B cell (primary cell): ENCODE measurements at regions of chr20 and their contacts with region 1.

Region 1: DNA sequence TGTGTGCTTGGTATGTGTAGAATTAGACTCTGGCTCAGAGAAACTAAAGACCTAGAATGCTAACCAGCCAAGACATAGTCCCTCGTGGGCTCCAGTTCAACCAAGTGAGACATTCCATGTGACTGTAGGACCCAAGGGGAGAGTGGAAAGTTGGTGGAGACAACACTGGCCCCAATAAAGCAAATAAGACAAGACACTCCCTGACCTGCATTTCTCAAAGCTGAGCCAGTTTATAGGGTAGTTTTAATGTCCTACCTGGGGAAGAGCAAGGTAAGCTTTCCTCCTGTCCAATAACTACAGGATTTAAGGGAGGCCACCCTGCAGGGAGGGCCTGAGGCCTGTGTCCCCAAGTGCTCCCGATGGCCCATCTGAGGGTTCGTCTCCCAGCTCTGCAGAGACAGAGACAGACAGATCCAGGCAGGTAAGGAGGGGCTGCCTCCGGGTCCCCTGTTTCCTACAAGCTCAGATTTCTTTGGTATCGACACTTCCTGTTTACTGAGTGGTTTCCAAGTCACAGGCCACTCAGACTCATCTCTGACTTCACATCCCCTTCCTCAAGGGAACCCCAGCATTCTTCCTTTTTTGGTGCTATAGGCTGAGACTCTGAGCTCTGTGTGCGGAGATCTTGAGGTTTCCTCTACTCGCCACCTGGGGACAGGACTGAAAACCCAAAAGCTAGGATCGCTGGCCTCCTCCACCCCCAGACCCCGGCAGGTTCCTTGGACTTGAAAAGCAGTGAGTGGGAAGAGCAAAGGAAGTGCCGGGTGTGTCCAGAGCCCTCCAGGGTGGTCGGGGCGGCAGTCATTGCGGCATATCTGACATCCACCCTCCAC is 92.4 kb downstream of the PRND start:
- DNase-seq: peak; percentile 94
- ATAC-seq: peak; percentile 48
- H3K4me3 ChIP-seq: peak overlapping the region; percentile 49 to 67 (median 50)
- H3K4me3 Mint-ChIP-seq: peak overlapping the region; percentile 92
- H3K27ac ChIP-seq: peak overlapping the region; percentile 99
- H3K27ac Mint-ChIP-seq: peak overlapping the region; percentile 99
- H3K4me1 ChIP-seq: peaks cover 69 to 82% of the 10 kb centered on the region in 2 donors
- H3K4me1 Mint-ChIP-seq: peaks cover 87% of the 10 kb centered on the region
- H3K27me3 ChIP-seq: no peaks in the 10 kb centered on the region
- H3K27me3 Mint-ChIP-seq: no peaks in the 10 kb centered on the region
- CTCF ChIP-seq: peak; percentile 12

Region 2: GRCh38 chr20:4869290-4870193 is 55.5 kb after region 1 on chr20:
- CTCF ChIA-PET with region 1: no interaction called
- POLR2A ChIA-PET with region 1: no interaction called
- intact Hi-C with region 1: loop called (anchors 10 kb)
- DNase-seq: no peak
- ATAC-seq: no peak
- H3K4me3 ChIP-seq: no peak overlapping the region
- H3K4me3 Mint-ChIP-seq: no peak overlapping the region
- H3K27ac ChIP-seq: no peak overlapping the region
- H3K27ac Mint-ChIP-seq: no peak overlapping the region
- H3K4me1 ChIP-seq: no peaks in the 10 kb centered on the region
- H3K4me1 Mint-ChIP-seq: no peaks in the 10 kb centered on the region
- H3K27me3 ChIP-seq: no peaks in the 10 kb centered on the region
- H3K27me3 Mint-ChIP-seq: no peaks in the 10 kb centered on the region
- CTCF ChIP-seq: no peak